IMR-90 (cell line): ENCODE measurements at regions of chr1 and their contacts with region 1.

Region 1: DNA sequence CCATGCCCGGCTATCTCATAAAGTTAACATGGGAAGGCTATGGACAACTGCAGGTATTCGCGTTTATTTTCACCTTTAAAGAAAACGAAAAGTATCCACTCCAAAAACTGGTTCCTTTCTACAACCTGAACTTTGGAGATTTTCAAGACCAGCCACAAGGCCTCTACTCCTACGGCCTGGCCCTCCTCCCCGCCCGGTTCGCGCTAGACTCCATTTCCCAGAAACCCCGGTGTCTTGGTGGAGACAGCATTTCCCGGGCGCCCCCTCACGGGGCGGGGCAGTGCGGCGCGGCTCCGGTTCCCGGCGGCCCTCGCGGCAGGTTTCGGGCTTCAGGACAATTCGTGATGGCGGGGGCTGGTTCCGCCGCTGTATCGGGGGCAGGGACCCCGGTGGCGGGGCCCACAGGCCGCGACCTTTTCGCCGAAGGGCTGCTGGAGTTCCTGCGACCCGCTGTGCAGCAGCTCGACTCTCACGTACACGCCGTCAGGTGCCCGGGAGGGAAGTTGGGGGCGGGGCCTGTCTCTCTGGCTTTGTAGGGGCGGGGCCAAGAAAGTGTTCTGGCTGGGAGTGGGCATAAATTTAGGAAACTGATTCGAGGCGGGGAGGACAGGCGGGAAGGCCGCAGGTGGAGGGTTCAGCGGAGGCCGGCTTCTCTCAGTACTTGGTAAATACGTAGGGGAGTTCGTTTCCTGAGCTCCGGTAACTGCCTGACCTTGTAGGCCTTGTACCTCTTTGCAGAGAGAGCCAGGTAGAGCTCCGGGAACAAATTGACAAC is at the start of gene SNAPIN:
- DNase-seq: peak; percentile 80
- ATAC-seq: peak; percentile 99
- H3K4me3 ChIP-seq: peak within 1 kb of the TSS; percentile 94
- H3K27ac ChIP-seq: peak within 1 kb of the TSS; percentile 92
- H3K4me1 ChIP-seq: peaks cover 1% of the 10 kb centered on the region
- H3K27me3 ChIP-seq: no peaks in the 10 kb centered on the region
- CTCF ChIP-seq: peak; percentile 28; the same call in 1 of the 2 replicates
- POLR2A ChIP-seq: peak; percentile 42; the same call in 1 of the 2 replicates
- RAD21 ChIP-seq: no peak
- total RNA-seq, gene SNAPIN: 37.2 and 40.9 TPM in 2 replicates

Region 2: DNA sequence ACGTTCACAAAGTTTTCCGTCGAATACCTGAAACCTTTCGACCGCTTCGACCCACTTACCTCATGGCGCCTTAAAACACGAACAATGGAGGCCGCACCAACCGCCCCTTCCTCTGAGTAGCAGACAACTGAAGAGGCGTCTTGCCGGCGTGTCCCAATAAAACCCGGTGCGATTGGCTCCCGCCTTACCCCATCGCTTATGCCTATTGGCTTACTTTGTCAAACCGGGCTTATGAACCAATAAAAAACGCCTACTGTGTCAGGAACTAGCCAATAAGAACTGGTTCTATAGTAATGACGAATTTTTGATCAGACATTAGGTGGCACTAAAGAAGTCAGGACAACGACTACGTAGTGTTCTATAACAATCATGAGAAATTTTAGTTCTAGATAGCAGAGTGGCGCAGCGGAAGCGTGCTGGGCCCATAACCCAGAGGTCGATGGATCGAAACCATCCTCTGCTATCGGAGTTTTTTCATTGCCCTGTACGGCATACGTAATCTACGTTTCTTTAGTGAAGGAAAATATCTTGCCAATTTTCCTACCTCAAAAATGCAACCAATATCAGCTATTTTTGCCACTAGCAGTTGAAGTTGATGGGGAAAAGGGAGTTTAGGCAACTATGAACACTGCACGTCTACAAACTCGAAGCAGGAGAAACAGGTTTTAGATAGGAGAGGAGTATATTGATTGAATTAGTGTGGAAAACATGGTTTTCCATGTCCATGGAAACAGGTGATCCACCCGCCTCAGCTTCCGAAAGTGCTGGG is 12.5 kb after region 1 on chr1 and contains the start of gene ILF2:
- CTCF ChIA-PET with region 1: no interaction called
- POLR2A ChIA-PET with region 1: interaction called, 14 read pairs
- dilution Hi-C with region 1: no loop called
- in situ Hi-C with region 1: no loop called
- intact Hi-C with region 1: no loop called
- DNase-seq: peak; percentile 100
- ATAC-seq: peak; percentile 93
- H3K4me3 ChIP-seq: peak within 1 kb of the TSS; percentile 65
- H3K27ac ChIP-seq: peak within 1 kb of the TSS; percentile 61
- H3K4me1 ChIP-seq: peaks cover 1% of the 10 kb centered on the region; the same call in 1 of the 2 replicates
- H3K27me3 ChIP-seq: no peaks in the 10 kb centered on the region
- CTCF ChIP-seq: peak; percentile 37
- POLR2A ChIP-seq: peak; percentile 97
- RAD21 ChIP-seq: no peak
- total RNA-seq, gene ILF2: 405 and 504 TPM in 2 replicates

Region 3: DNA sequence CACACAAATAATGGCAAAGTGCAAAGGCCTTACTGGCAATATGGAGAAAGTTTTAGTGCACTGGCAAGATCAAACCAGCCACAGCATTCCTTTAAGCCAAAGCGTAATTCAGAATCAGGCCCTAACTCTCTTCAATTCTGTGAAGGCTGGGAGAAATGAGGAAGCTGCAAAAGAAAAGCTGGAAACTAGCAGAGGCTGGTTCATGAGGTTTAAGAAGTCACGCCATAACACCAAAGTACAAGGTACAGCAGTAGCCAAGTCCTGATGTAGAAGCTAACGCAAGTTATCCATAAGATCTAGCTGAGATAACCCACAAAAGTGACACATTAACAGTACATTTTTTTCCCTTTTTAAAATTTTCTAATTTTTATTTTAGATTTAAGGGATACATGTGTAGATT is 173.7 kb after region 1 on chr1:
- CTCF ChIA-PET with region 1: no interaction called
- POLR2A ChIA-PET with region 1: no interaction called
- dilution Hi-C with region 1: no loop called
- in situ Hi-C with region 1: no loop called
- intact Hi-C with region 1: no loop called
- DNase-seq: no peak
- ATAC-seq: no peak
- H3K4me3 ChIP-seq: no peak overlapping the region
- H3K27ac ChIP-seq: no peak overlapping the region
- H3K4me1 ChIP-seq: no peaks in the 10 kb centered on the region
- H3K27me3 ChIP-seq: no peaks in the 10 kb centered on the region
- CTCF ChIP-seq: no peak
- POLR2A ChIP-seq: no peak
- RAD21 ChIP-seq: no peak

Region 4: DNA sequence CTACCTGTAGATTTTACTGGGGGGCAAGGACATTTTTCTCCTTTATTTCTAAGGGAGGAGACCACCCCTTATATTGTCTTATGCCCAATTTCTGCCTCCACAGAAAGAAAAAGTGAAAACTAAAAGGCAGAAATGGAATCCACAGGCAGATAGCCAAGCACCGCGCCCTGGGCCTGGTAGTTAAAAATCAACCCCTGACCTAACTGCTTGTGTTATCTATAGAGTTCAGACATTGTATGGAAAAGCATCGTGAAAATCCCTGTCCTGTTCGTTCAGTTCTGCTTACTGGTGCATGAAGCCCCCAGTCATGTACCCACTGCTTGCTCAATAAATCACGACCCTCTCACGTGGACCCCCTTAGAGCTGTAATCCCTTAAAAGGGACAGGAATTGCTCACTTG is 712.8 kb after region 1 on chr1:
- CTCF ChIA-PET with region 1: no interaction called
- POLR2A ChIA-PET with region 1: no interaction called
- dilution Hi-C with region 1: no loop called
- in situ Hi-C with region 1: no loop called
- intact Hi-C with region 1: no loop called
- DNase-seq: no peak
- ATAC-seq: no peak
- H3K4me3 ChIP-seq: no peak overlapping the region
- H3K27ac ChIP-seq: no peak overlapping the region
- H3K4me1 ChIP-seq: no peaks in the 10 kb centered on the region
- H3K27me3 ChIP-seq: no peaks in the 10 kb centered on the region; the same call in 1 of the 2 replicates
- CTCF ChIP-seq: no peak
- POLR2A ChIP-seq: no peak
- RAD21 ChIP-seq: no peak

Region 5: DNA sequence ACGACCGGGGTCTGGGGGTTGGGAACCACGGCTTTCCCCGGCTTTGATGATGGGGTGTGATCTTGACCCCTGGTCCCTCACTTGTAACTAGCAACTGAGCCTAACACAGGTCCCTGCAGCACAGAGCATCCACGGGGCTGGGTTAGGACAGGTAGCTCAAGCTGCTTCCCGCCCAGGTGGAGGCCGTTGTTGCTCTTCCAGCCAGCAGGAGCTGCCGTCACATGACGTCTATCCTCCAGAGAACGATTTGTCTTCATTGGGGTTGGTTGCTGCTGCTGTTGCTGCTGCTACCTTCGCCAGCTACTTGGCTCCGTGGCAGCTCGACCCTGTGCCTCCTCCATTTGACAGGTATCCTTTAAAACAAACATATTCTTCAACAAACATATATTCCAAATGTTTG is 1023.7 kb after region 1 on chr1:
- CTCF ChIA-PET with region 1: no interaction called
- POLR2A ChIA-PET with region 1: interaction called, 20 read pairs
- dilution Hi-C with region 1: no loop called
- in situ Hi-C with region 1: no loop called
- intact Hi-C with region 1: no loop called
- DNase-seq: no peak
- ATAC-seq: no peak
- H3K4me3 ChIP-seq: no peak overlapping the region
- H3K27ac ChIP-seq: no peak overlapping the region
- H3K4me1 ChIP-seq: no peaks in the 10 kb centered on the region
- H3K27me3 ChIP-seq: peaks cover 34% of the 10 kb centered on the region
- CTCF ChIP-seq: no peak
- POLR2A ChIP-seq: no peak
- RAD21 ChIP-seq: no peak